IMR-90 (cell line): ENCODE measurements at regions of chr9 and their contacts with region 1.

Region 1: GRCh38 chr9:97921959-97922724 is at the start of gene TRMO:
- DNase-seq: peak; percentile 99
- ATAC-seq: peak; percentile 94
- H3K4me3 ChIP-seq: peak within 1 kb of the TSS; percentile 76
- H3K27ac ChIP-seq: peak within 1 kb of the TSS; percentile 96
- H3K4me1 ChIP-seq: peaks cover 2% of the 10 kb centered on the region; the same call in 1 of the 2 replicates
- H3K27me3 ChIP-seq: peaks cover 4% of the 10 kb centered on the region; the same call in 1 of the 2 replicates
- CTCF ChIP-seq: peak; percentile 72
- POLR2A ChIP-seq: peak; percentile 98
- RAD21 ChIP-seq: peak; percentile 58
- total RNA-seq, gene TRMO: 17.5 and 19.9 TPM in 2 replicates

Region 2: DNA sequence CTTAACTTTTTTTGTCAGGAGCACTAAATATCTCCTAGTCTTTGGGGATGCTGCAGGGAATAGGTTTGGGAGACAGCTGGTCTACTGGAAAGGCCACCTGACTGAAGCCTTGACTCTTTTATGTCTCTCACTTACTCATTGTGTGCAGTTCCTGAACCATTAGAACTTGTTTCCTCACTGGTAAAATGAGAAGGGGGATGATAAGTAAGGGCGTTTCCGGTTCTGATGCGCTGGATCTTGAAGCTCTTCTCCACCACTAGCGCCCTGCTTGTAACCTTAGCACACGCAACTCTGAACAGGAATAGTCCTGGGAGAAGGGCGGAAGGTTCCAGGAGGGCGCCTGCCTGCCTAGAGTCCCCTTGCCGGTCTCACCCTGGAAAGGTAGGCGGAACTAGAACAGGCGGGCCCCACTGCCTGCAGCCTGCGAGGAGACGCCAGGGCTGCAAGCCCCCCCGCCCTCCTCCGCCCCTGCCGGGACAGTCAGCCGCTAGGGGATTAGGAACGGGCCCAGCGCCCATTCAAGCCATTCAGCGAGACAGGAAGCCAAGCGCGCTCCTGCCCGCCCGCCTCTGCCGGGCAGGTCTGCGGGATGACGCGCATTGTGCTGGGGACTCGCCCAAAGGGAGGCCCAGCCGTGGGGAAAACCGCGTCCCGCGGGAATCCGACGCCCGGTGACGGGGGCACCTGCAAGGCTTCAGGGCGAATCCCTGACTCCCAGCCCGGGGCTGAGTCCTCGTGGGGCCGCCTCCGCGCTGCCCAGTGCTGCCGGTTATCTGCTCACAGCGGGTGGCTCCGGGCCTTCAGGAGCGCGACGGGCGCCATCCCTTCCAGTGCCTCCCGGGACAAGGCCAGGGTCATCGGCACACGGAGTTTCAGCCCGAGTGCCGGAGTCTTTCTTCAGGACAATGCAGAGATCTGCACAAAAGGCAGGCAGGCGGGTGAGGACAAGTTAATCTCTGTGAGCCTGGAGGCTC is 181.0 kb before region 1 on chr9:
- CTCF ChIA-PET with region 1: no interaction called
- POLR2A ChIA-PET with region 1: no interaction called
- dilution Hi-C with region 1: no loop called
- in situ Hi-C with region 1: no loop called
- intact Hi-C with region 1: no loop called
- DNase-seq: peak; percentile 62
- ATAC-seq: peak; percentile 82
- H3K4me3 ChIP-seq: peak overlapping the region; percentile 6; the same call in 1 of the 2 replicates
- H3K27ac ChIP-seq: no peak overlapping the region
- H3K4me1 ChIP-seq: no peaks in the 10 kb centered on the region
- H3K27me3 ChIP-seq: peaks cover 45% of the 10 kb centered on the region
- CTCF ChIP-seq: no peak; the same call in 1 of the 2 replicates
- POLR2A ChIP-seq: no peak
- RAD21 ChIP-seq: no peak

Region 3: DNA sequence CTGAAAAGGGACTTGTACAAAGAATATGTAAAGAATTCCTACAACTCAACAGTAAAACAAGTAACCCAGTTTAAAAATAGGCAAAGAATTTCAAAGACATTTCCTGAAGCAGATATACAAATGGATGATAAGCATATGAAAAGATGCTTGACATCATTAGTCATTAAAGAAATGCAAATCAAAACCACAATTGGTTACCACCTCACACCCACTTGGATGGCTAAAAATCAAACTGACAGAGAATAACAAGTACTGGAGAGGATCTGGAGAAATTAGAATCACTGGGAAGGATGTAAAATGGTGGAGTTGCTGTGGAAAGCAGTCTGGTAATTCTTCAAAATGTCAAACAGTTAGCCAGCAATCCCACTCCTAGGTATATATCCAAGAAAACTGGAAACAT is 81.6 kb before region 1 on chr9:
- CTCF ChIA-PET with region 1: no interaction called
- POLR2A ChIA-PET with region 1: no interaction called
- dilution Hi-C with region 1: no loop called
- in situ Hi-C with region 1: no loop called
- intact Hi-C with region 1: no loop called
- DNase-seq: peak; percentile 44
- ATAC-seq: no peak
- H3K4me3 ChIP-seq: no peak overlapping the region
- H3K27ac ChIP-seq: no peak overlapping the region
- H3K4me1 ChIP-seq: no peaks in the 10 kb centered on the region
- H3K27me3 ChIP-seq: peaks cover 5% of the 10 kb centered on the region
- CTCF ChIP-seq: no peak
- POLR2A ChIP-seq: no peak
- RAD21 ChIP-seq: no peak

Region 4: DNA sequence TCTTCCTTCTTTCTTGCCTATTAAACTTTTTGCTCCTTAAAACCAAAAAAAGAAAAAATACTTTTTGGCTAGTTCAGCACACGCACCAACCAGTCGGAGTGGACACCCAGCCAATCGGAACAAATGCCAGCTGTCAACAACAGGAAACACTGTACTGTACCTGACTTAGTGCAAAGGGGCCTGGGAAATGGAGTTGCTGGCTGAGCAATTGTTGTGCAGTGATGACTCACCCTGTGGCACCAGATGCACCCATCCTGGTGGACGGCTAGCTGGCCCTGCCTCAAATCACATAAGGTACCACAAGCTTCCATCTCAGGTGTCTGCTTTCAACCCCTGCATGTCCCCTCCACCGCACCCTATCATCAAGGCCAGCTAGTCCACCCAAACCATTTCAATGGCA is 48.3 kb before region 1 on chr9:
- CTCF ChIA-PET with region 1: no interaction called
- POLR2A ChIA-PET with region 1: no interaction called
- dilution Hi-C with region 1: no loop called
- in situ Hi-C with region 1: no loop called
- intact Hi-C with region 1: no loop called
- DNase-seq: peak; percentile 10
- ATAC-seq: no peak
- H3K4me3 ChIP-seq: no peak overlapping the region
- H3K27ac ChIP-seq: no peak overlapping the region
- H3K4me1 ChIP-seq: peaks cover 3% of the 10 kb centered on the region; the same call in 1 of the 2 replicates
- H3K27me3 ChIP-seq: peaks cover 16% of the 10 kb centered on the region
- CTCF ChIP-seq: no peak
- POLR2A ChIP-seq: no peak
- RAD21 ChIP-seq: no peak

Region 5: GRCh38 chr9:98034593-98035546 is 112.7 kb after region 1 on chr9:
- CTCF ChIA-PET with region 1: interaction called, 3 read pairs
- POLR2A ChIA-PET with region 1: no interaction called
- dilution Hi-C with region 1: no loop called
- in situ Hi-C with region 1: no loop called
- intact Hi-C with region 1: loop called (anchors 1 kb)
- DNase-seq: peak; percentile 75
- ATAC-seq: no peak
- H3K4me3 ChIP-seq: no peak overlapping the region
- H3K27ac ChIP-seq: peak overlapping the region; percentile 80
- H3K4me1 ChIP-seq: peaks cover 14% of the 10 kb centered on the region
- H3K27me3 ChIP-seq: no peaks in the 10 kb centered on the region
- CTCF ChIP-seq: peak; percentile 59
- POLR2A ChIP-seq: no peak
- RAD21 ChIP-seq: peak; percentile 34

Region 6: GRCh38 chr9:98074115-98074990 is 152.2 kb after region 1 on chr9:
- CTCF ChIA-PET with region 1: interaction called, 4 read pairs
- POLR2A ChIA-PET with region 1: no interaction called
- dilution Hi-C with region 1: no loop called
- in situ Hi-C with region 1: no loop called
- intact Hi-C with region 1: loop called (anchors 1 kb)
- DNase-seq: peak; percentile 59
- ATAC-seq: peak; percentile 91
- H3K4me3 ChIP-seq: no peak overlapping the region
- H3K27ac ChIP-seq: 0 out of 2 replicates have a peak overlapping the region, but pooled peaks have one; percentile 0
- H3K4me1 ChIP-seq: peaks cover 5% of the 10 kb centered on the region
- H3K27me3 ChIP-seq: no peaks in the 10 kb centered on the region
- CTCF ChIP-seq: peak; percentile 94
- POLR2A ChIP-seq: no peak
- RAD21 ChIP-seq: peak; percentile 85

Region 7: GRCh38 chr9:98192503-98193335 is 270.6 kb after region 1 on chr9 and contains the start of gene CORO2A:
- CTCF ChIA-PET with region 1: interaction called, 4 read pairs
- POLR2A ChIA-PET with region 1: no interaction called
- dilution Hi-C with region 1: no loop called
- in situ Hi-C with region 1: no loop called
- intact Hi-C with region 1: loop called (anchors 2 kb)
- DNase-seq: peak; percentile 63
- ATAC-seq: peak; percentile 94
- H3K4me3 ChIP-seq: peak within 1 kb of the TSS; percentile 77
- H3K27ac ChIP-seq: peak within 1 kb of the TSS; percentile 14; the same call in 1 of the 2 replicates
- H3K4me1 ChIP-seq: peaks cover 3% of the 10 kb centered on the region
- H3K27me3 ChIP-seq: 0 out of 2 replicates have a peak, but pooled peaks cover 3% of the 10 kb centered on the region
- CTCF ChIP-seq: peak; percentile 59
- POLR2A ChIP-seq: no peak
- RAD21 ChIP-seq: peak; percentile 48
- total RNA-seq, gene CORO2A: 1.9 and 2.2 TPM in 2 replicates

Region 8: GRCh38 chr9:98255578-98256296 is 333.6 kb after region 1 on chr9 and contains the start of gene TBC1D2:
- CTCF ChIA-PET with region 1: interaction called, 3 read pairs
- POLR2A ChIA-PET with region 1: no interaction called
- dilution Hi-C with region 1: no loop called
- in situ Hi-C with region 1: loop called (anchors 5 kb)
- intact Hi-C with region 1: loop called (anchors 2 kb)
- DNase-seq: peak; percentile 90
- ATAC-seq: peak; percentile 93
- H3K4me3 ChIP-seq: peak within 1 kb of the TSS; percentile 72
- H3K27ac ChIP-seq: peak within 1 kb of the TSS; percentile 97
- H3K4me1 ChIP-seq: peaks cover 19% of the 10 kb centered on the region
- H3K27me3 ChIP-seq: no peaks in the 10 kb centered on the region
- CTCF ChIP-seq: no peak
- POLR2A ChIP-seq: no peak
- RAD21 ChIP-seq: no peak
- total RNA-seq, gene TBC1D2: 35.6 and 36.9 TPM in 2 replicates

Region 9: DNA sequence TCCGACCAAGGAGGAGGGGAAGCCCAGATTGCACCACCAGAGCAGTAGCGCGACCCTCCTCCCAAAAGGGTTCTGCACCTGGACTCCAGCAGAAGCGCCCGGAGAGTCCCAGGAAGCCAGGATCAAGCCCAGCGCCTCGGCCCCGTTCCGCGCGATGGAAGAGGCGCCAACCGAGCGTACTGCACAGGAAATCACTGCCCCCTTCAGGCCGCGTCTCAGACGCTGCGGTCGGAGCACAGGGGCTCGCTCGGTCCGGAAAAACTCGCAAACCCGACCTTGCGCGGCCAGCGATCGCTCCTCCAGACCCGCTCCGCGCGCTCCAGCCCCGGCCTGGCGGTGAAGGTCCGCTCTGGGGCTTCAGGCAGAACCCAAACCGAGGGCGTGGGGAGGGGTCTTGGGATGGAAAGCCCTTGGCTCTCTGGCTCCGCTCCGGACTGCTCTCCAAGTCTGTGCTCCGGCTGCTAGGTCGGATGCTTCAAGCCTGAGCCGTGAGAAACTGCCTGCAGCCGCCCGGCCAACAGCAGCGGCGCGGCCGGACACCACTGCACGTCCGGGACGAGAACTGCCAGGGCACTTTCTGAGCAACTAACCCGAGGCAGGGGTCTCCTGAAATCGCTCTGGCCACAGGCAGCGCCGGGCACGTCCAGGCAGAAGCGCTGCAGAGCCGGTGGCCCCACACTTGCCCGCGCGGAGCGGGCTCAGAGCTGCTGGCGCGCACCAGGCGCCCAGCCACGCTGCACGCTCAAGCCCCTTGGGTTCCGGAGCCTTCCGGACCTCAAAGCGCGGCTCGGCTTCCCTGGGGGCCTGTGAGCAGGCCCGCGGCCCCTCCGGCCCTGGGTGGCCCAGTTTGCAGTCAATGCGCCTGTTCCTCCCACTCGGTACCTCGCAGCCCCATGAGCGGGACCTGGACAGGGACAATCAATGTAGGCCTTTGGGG is 785.3 kb after region 1 on chr9:
- CTCF ChIA-PET with region 1: no interaction called
- POLR2A ChIA-PET with region 1: no interaction called
- dilution Hi-C with region 1: no loop called
- in situ Hi-C with region 1: no loop called
- intact Hi-C with region 1: loop called (anchors 2 kb)
- DNase-seq: peak; percentile 85
- ATAC-seq: peak; percentile 86
- H3K4me3 ChIP-seq: peak overlapping the region; percentile 45
- H3K27ac ChIP-seq: peak overlapping the region; percentile 50
- H3K4me1 ChIP-seq: peaks cover 5% of the 10 kb centered on the region
- H3K27me3 ChIP-seq: peaks cover 10% of the 10 kb centered on the region
- CTCF ChIP-seq: peak; percentile 79
- POLR2A ChIP-seq: no peak
- RAD21 ChIP-seq: peak; percentile 89